ENCODE measurements at regions of chr15 and their contacts with region 1.

Region 1: DNA sequence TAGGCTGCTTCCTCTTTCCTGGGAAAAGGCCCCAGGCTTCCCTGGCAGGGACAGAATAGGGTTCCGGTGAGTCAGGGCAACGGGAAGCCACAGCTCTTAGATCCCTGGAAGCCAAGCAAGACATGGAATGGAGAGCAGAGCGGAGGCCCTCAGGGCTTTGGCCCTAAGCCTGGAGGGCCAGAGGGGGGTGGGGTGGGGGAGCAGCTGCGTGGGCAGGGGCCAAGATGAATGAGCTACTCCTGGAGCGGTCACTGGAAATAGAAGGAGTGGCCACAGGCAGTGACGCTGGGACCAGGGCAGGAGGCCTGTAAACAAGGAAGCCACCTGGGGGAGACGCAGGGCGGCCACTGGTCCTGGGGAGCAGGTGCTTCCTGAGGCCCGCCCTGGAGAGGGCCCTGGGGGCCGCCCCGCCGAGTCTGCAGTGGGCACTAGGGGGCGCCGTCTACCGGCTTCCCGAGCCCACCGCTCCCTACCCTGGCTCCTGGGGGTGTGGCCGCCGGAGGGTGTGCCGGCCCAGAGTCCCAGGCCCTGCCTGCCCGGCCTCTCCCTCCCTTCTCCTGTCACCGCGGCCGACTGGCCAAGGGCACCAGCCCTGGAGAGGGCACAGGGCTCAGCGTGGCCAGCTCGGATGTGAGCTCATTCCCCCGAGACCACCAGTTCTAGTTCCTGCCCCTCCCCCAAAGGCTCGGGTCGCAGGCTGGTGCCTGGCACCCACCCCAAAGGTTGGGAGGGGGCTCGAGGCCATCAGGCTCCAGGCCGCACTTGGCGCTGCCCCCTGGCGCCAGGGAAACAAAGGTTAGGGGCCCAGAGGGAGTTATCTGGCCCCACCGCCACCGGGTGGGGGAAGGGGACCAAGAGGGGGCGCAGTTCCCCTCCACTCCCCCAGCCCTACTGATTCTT is 12.1 kb downstream of the VPS18 start:
- DNase-seq: peak; percentile 81
- ATAC-seq: peak; percentile 81
- H3K4me3 Mint-ChIP-seq: peak overlapping the region; percentile 71
- H3K27ac Mint-ChIP-seq: peak overlapping the region; percentile 70
- H3K4me1 Mint-ChIP-seq: peaks cover 48% of the 10 kb centered on the region
- H3K27me3 Mint-ChIP-seq: no peaks in the 10 kb centered on the region

Region 2: DNA sequence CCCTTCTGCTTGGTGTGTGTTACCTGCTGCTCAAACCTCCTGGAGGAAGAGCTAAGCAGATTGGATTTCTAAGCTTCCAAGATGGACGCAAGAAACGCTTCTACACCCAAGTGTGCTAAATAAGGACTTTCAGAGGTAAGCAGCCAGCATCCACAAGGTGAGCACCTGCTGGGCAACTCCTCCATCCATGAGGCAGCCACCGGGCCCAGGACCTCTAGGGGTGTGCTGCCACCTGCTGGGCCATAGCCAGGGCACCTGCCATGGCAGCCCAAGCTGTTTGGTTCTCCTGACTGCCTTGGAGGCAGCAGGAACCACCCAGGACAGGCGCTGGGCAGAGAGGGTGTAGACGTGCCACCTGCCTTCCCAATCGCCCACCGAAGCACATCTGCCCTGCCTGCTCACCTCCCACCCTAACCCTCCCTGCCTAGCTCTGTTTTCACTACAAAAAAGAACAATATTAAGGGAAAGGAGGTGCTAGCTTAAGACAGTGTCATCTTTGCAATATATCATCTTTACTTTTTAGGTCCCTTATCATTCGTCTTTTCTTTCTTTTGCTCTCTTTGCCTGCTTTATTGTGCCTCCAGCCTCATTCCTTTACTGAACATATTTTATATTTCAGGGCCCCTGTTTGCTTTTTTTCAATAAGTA is 123.6 kb before region 1 on chr15:
- CTCF ChIA-PET with region 1: no interaction called
- POLR2A ChIA-PET with region 1: no interaction called
- DNase-seq: peak; percentile 85
- ATAC-seq: peak; percentile 98
- H3K4me3 Mint-ChIP-seq: no peak overlapping the region
- H3K27ac Mint-ChIP-seq: no peak overlapping the region
- H3K4me1 Mint-ChIP-seq: peaks cover 24% of the 10 kb centered on the region
- H3K27me3 Mint-ChIP-seq: no peaks in the 10 kb centered on the region

Region 3: GRCh38 chr15:40857601-40858341 is 48.6 kb before region 1 on chr15:
- CTCF ChIA-PET with region 1: interaction called, 66 read pairs
- POLR2A ChIA-PET with region 1: no interaction called
- DNase-seq: peak; percentile 86
- ATAC-seq: peak; percentile 91
- H3K4me3 Mint-ChIP-seq: no peak overlapping the region
- H3K27ac Mint-ChIP-seq: no peak overlapping the region
- H3K4me1 Mint-ChIP-seq: peaks cover 19% of the 10 kb centered on the region
- H3K27me3 Mint-ChIP-seq: peaks cover 3% of the 10 kb centered on the region

Region 4: DNA sequence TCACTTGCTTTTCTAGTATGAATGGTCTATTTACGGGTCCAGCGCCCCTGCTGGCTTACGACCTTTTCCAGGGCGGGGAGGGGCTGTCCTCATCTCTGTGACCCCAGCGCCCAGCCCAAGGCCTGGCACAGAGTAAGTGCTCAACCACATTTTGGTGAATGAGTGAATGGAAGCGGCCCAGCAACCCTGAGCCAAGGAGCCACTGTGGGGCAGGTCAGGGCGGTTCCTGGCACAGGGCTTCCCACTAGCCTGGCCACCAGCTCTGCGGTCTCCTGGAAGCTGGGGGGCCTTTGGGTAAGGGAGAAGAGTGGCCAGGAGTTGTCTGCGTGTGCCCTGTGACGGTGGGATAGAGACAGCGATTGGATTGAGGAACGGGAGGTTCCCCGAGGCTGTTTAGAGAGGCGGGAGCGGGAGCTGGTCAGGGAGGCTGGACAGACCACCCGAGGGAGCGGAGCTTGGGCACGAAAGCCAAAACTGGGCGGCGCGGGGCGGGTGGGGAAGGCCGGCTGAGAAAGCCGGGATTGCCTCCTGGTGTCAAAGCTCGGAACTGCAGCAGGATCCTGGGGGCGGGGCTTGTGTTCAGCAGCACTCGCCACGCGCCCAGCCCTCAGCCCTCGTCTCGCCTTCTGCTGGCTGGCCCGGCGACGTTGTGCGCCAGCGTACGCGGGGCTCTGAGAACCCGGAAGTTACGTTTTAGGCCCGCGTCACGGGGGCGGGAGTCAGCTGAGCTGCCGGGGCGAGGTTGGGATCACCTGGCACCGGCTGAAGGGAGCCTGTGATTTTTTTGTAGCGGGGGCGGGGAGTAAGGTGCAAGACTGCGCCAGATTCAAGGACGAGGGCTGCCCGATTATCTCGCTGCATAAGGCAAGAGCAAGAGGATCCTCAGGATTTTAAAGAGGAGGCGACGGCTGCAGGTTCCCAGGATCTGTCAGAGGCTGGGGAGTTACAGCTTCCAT is 12.3 kb before region 1 on chr15 and contains the start of gene VPS18:
- CTCF ChIA-PET with region 1: interaction called, 117 read pairs
- POLR2A ChIA-PET with region 1: no interaction called
- DNase-seq: peak; percentile 99
- ATAC-seq: peak; percentile 98
- H3K4me3 Mint-ChIP-seq: peak within 1 kb of the TSS; percentile 100
- H3K27ac Mint-ChIP-seq: peak within 1 kb of the TSS; percentile 98
- H3K4me1 Mint-ChIP-seq: peaks cover 42% of the 10 kb centered on the region
- H3K27me3 Mint-ChIP-seq: peaks cover 13% of the 10 kb centered on the region
- total RNA-seq, gene VPS18: 17.8 to 18.4 TPM

Region 5: DNA sequence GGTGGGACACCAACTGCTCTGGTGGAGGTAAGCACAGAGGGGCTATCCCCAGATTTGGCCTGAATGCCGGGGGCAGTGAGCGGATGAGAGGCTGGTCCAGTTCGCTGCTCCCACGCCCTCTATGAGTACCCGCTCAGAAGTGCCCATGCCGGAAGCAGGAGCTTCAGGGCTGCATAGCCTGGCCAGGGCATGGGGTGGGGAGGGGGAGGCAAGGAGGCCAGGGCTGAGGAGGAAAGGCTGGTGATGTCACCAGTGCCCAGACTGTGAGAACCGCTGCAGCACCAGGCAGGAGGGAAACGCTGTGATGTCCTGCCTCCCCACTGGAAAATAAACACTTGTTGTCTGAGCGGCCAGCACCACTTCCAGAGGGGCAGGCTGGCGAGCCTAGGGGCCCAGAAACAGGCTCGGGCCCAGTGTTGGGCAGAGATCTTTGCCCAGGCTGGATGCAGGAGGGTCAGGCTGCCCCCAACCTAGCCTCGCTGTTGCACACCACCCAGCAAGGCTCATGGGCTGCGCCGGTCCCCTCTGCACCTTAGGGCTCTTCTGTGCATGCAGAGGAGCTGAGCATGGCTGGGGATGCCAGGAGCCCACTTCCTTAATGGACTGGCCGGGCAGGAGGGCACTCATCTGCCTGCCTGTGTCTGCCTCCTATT is 11.9 kb after region 1 on chr15:
- CTCF ChIA-PET with region 1: interaction called, 12 read pairs
- POLR2A ChIA-PET with region 1: interaction called, 3 read pairs
- DNase-seq: no peak
- ATAC-seq: no peak
- H3K4me3 Mint-ChIP-seq: no peak overlapping the region
- H3K27ac Mint-ChIP-seq: no peak overlapping the region
- H3K4me1 Mint-ChIP-seq: no peaks in the 10 kb centered on the region
- H3K27me3 Mint-ChIP-seq: no peaks in the 10 kb centered on the region

Region 6: GRCh38 chr15:40928821-40929659 is 22.7 kb after region 1 on chr15 and contains the start of gene DLL4:
- CTCF ChIA-PET with region 1: interaction called, 75 read pairs
- POLR2A ChIA-PET with region 1: interaction called, 3 read pairs
- DNase-seq: peak; percentile 51
- ATAC-seq: peak; percentile 53
- H3K4me3 Mint-ChIP-seq: peak within 1 kb of the TSS; percentile 50
- H3K27ac Mint-ChIP-seq: no peak within 1 kb of the TSS
- H3K4me1 Mint-ChIP-seq: peaks cover 57% of the 10 kb centered on the region
- H3K27me3 Mint-ChIP-seq: peaks cover 77% of the 10 kb centered on the region
- total RNA-seq, gene DLL4: not detected

Region 7: DNA sequence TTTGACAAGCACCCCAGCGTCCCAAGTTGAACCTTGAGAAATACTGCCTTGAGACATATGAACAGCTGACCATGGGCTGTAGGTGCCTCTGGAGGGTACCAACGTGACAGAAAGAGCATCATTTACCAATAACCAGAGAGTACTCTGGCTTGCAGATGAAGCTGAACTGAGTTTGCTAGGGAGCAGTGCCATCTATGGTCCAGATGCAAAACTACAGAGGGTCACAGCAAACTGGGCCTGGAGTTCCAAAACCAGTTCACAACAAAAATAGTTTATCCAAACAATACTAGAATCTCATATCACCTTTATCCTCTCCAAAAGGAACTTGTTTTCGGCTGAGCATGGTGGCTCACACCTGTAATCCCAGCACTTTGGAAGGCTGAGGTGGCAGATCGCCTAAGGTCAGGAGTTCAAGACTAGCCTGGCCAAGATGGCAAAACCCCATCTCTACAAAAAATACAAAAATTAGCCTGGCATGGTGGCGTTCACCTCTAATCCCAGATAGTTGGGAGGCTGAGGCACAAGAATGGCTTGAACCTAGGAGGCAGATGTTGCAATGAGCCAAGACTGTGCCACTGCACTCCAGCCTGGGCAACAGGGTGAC is 116.2 kb after region 1 on chr15:
- CTCF ChIA-PET with region 1: interaction called, 176 read pairs
- POLR2A ChIA-PET with region 1: no interaction called
- DNase-seq: peak; percentile 68
- ATAC-seq: no peak
- H3K4me3 Mint-ChIP-seq: no peak overlapping the region
- H3K27ac Mint-ChIP-seq: no peak overlapping the region
- H3K4me1 Mint-ChIP-seq: peaks cover 3% of the 10 kb centered on the region
- H3K27me3 Mint-ChIP-seq: no peaks in the 10 kb centered on the region

Region 8: DNA sequence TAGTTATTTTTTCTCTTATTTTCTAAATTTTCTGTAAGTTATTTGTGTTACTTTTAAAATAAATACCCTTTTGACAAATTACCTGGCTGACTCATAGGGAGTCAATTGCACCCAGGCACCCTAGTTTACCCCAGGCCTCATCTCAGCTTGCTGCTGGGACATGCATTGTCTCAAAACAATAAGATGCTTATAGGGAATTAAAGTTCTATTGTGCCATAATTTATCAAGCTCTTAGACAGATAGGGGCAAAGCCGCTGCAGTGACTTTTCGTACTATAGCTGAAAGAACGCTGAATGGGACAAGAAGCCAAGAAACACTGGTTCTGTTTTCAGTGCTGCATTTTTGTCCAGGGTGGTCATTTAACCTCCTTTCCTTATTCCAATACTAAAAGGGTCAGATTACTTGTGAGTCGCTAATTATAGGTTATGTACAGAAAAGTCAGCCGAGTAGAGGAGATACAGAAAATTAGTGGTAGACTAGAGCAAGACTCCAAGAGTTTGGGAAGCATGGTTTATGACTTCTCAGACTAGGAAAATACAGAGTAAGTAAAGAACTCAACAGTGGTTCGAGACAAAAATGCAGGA is 274.0 kb after region 1 on chr15:
- CTCF ChIA-PET with region 1: interaction called, 93 read pairs
- POLR2A ChIA-PET with region 1: no interaction called
- DNase-seq: no peak
- ATAC-seq: no peak
- H3K4me3 Mint-ChIP-seq: no peak overlapping the region
- H3K27ac Mint-ChIP-seq: no peak overlapping the region
- H3K4me1 Mint-ChIP-seq: no peaks in the 10 kb centered on the region
- H3K27me3 Mint-ChIP-seq: peaks cover 9% of the 10 kb centered on the region